ENCODE measurements at regions of chr20 and their contacts with region 1.

Region 1: GRCh38 chr20:34069341-34070078 is 42.5 kb downstream of the EIF2S2 start:
- DNase-seq: peak; percentile 72
- H3K4me3 ChIP-seq: no peak overlapping the region
- H3K27ac ChIP-seq: no peak overlapping the region
- H3K4me1 ChIP-seq: peaks cover 46% of the 10 kb centered on the region
- H3K27me3 ChIP-seq: no peaks in the 10 kb centered on the region
- CTCF ChIP-seq: peak; percentile 87 to 88

Region 2: GRCh38 chr20:33719989-33720709 is 349.4 kb before region 1 on chr20 and contains the start of gene PXMP4:
- CTCF ChIA-PET with region 1: no interaction called
- dilution Hi-C with region 1: no loop called
- in situ Hi-C with region 1: no loop called
- intact Hi-C with region 1: loop called (anchors 5 kb)
- DNase-seq: peak; percentile 97
- H3K4me3 ChIP-seq: peak within 1 kb of the TSS; percentile 70 to 88 (median 80)
- H3K27ac ChIP-seq: peak within 1 kb of the TSS; percentile 5
- H3K4me1 ChIP-seq: no peaks in the 10 kb centered on the region
- H3K27me3 ChIP-seq: no peaks in the 10 kb centered on the region
- CTCF ChIP-seq: no peak
- total RNA-seq, gene PXMP4: 8.0 to 11.3 TPM

Region 3: GRCh38 chr20:33862709-33863403 is 206.7 kb before region 1 on chr20:
- CTCF ChIA-PET with region 1: interaction called, 5 read pairs
- dilution Hi-C with region 1: no loop called
- in situ Hi-C with region 1: no loop called
- intact Hi-C with region 1: loop called (anchors 1 kb)
- DNase-seq: no peak
- H3K4me3 ChIP-seq: no peak overlapping the region
- H3K27ac ChIP-seq: no peak overlapping the region
- H3K4me1 ChIP-seq: peaks cover 4% of the 10 kb centered on the region
- H3K27me3 ChIP-seq: no peaks in the 10 kb centered on the region
- CTCF ChIP-seq: peak; percentile 58 to 81

Region 4: GRCh38 chr20:33933469-33933909 is 136.0 kb before region 1 on chr20:
- CTCF ChIA-PET with region 1: interaction called, 5 read pairs
- dilution Hi-C with region 1: no loop called
- in situ Hi-C with region 1: loop called (anchors 10 kb)
- intact Hi-C with region 1: loop called (anchors 1 kb)
- DNase-seq: peak; percentile 61
- H3K4me3 ChIP-seq: no peak overlapping the region
- H3K27ac ChIP-seq: no peak overlapping the region
- H3K4me1 ChIP-seq: no peaks in the 10 kb centered on the region
- H3K27me3 ChIP-seq: no peaks in the 10 kb centered on the region
- CTCF ChIP-seq: peak; percentile 81 to 88

Region 5: DNA sequence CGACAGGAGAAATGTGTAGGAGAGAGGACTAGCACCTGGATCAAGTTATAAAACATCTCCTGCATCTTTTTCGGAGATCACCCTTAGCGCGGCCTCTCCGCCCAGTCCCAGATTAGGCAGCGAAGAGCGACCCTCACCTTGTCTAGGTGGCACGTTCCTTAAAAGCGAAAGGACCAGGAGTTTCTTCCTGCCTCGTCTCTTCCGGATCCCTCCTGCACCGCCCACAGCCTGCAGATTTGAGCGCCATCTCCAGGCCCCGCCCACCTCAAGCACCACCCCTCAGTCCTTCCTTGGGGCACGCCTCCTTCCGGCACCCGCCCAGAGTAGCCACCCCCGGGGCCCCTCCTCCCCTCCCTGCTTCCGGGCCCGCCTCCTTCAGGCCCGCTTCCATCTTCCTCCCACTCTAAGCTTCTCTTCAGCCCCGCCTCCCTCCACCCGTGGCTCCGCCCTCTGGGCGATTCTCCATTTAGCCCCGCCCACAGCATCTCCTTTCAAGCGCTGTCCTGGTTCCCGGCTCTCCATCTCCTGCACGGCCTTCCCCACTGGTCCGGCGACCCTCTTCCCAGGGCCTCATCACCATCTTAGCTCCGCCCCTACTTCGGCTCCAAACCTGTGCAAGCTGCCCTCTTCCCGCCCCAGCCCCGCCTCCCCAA is 76.5 kb before region 1 on chr20:
- CTCF ChIA-PET with region 1: no interaction called
- dilution Hi-C with region 1: no loop called
- in situ Hi-C with region 1: no loop called
- intact Hi-C with region 1: loop called (anchors 1 kb)
- DNase-seq: peak; percentile 98
- H3K4me3 ChIP-seq: peak overlapping the region; percentile 68 to 93 (median 89)
- H3K27ac ChIP-seq: peak overlapping the region; percentile 86
- H3K4me1 ChIP-seq: peaks cover 15% of the 10 kb centered on the region
- H3K27me3 ChIP-seq: no peaks in the 10 kb centered on the region
- CTCF ChIP-seq: no peak

Region 6: DNA sequence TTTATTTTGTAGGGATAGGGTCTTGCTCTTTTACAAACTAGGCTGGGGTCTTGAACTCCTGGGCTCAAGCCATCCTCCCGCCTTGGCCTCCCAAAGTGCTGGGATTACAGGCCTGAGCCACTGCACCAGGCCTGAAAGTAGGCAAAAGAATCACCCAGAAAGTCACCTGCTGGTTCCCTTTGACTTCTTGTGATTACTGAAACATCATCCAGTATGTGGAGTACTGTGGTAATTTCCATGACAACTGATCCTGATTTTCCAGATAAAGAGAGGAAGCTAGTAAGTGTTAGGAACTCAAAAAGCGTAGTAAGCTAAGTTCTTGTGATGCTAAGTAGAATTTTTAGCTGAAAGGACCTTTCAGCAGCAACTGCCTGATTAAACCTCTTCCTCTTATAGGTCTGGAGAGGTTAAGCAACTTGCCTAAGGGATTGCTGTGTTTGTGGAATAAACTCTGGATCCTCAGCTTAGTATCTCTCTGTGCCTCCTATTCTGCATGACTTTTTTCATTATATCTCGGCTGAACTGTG is 59.0 kb before region 1 on chr20:
- CTCF ChIA-PET with region 1: no interaction called
- dilution Hi-C with region 1: no loop called
- in situ Hi-C with region 1: no loop called
- intact Hi-C with region 1: no loop called
- DNase-seq: no peak
- H3K4me3 ChIP-seq: no peak overlapping the region
- H3K27ac ChIP-seq: no peak overlapping the region
- H3K4me1 ChIP-seq: peaks cover 3% of the 10 kb centered on the region
- H3K27me3 ChIP-seq: no peaks in the 10 kb centered on the region
- CTCF ChIP-seq: no peak

Region 7: DNA sequence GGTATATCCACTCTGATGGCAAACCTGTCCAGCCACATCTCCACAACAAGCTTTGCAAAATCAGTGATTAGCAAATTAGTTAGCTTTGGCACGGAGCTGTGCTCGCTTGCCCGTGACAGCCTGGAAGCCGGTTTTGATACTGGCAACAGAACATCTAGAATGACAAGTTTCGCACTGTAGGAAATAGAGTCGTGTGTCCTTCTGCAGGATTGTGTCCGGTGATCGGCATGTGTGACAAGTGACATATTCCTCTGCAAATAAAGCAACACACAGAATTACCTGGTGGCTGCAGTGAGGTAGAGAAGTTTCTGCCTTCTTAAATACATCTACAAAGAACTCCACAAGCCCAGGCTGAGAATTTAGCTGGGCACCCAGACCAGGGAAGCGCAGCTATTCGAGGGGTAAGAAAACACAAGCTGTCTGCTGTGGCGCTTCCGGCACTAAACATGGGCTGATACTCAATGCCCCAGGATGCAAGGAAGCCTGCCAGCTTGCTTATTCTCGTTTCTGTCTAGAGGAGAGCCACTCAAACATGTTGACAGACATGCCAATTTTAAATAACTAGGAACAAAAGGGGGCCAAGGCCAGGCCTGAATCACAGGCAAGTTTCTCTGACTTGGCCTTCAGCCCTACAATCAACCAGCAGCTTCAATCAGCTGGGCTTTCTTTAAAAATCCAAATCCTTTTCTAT is 20.3 kb after region 1 on chr20:
- CTCF ChIA-PET with region 1: no interaction called
- dilution Hi-C with region 1: no loop called
- in situ Hi-C with region 1: no loop called
- intact Hi-C with region 1: no loop called
- DNase-seq: no peak
- H3K4me3 ChIP-seq: no peak overlapping the region
- H3K27ac ChIP-seq: no peak overlapping the region
- H3K4me1 ChIP-seq: no peaks in the 10 kb centered on the region
- H3K27me3 ChIP-seq: no peaks in the 10 kb centered on the region
- CTCF ChIP-seq: no peak

Region 8: GRCh38 chr20:34129518-34130162 is 60.1 kb after region 1 on chr20:
- CTCF ChIA-PET with region 1: no interaction called
- dilution Hi-C with region 1: loop called (anchors 5 kb)
- in situ Hi-C with region 1: no loop called
- intact Hi-C with region 1: loop called (anchors 1 kb)
- DNase-seq: peak; percentile 64
- H3K4me3 ChIP-seq: no peak overlapping the region
- H3K27ac ChIP-seq: no peak overlapping the region
- H3K4me1 ChIP-seq: peaks cover under 1% of the 10 kb centered on the region
- H3K27me3 ChIP-seq: no peaks in the 10 kb centered on the region
- CTCF ChIP-seq: peak; percentile 83 to 85